Activated naive CD4-positive, alpha-beta T cell treated with anti-CD3 and anti-CD28 coated beads for 36 hours (primary cell): ENCODE measurements at regions of chr1 and their contacts with region 1.

Region 1: GRCh38 chr1:223123011-223123610 is 19.9 kb downstream of the TLR5 start:
- DNase-seq: no peak
- H3K4me3 Mint-ChIP-seq: peak overlapping the region; percentile 14
- H3K27ac Mint-ChIP-seq: no peak overlapping the region
- H3K4me1 Mint-ChIP-seq: peaks cover 8% of the 10 kb centered on the region
- H3K27me3 Mint-ChIP-seq: no peaks in the 10 kb centered on the region

Region 2: DNA sequence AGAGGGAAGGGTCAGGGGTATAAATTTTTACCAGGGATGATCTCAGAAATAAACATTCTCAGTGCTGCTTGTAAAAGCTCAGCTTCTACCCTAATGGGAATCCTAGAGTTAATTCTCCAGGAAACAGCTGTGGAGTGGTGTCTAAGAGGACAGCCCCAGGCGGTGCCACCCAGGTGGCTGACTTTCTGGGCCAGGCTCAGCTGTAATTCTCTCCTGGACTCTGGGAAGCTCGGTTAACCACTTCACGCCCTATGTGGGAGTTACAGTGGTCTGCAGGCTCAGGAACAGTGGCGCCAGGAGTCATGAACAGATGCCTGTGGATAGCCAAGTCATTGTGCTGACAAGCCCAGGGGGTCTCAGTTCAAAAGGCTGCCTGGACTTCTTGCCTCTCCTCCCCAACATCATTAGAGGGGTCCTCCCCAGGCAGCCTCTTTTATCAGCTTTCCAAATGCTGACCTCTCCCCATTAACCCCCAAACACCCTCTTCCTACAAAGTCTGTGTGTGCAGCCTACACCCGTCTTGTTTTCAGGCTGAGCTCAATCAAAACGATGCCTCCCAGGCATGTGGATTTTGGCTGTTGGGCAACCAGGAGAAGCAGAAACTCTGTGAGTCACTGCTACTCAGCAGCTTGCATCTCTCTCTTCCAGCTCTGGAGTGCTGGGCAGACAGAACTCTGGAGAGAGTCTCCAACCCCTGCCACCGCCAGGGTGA is 576.4 kb before region 1 on chr1:
- CTCF ChIA-PET with region 1: no interaction called
- intact Hi-C with region 1: no loop called
- DNase-seq: no peak
- H3K4me3 Mint-ChIP-seq: no peak overlapping the region
- H3K27ac Mint-ChIP-seq: no peak overlapping the region
- H3K4me1 Mint-ChIP-seq: no peaks in the 10 kb centered on the region
- H3K27me3 Mint-ChIP-seq: peaks cover 27% of the 10 kb centered on the region

Region 3: GRCh38 chr1:222736972-222737371 is 386.1 kb before region 1 on chr1 and contains the start of gene FAM177B:
- CTCF ChIA-PET with region 1: interaction called, 8 read pairs
- intact Hi-C with region 1: loop called (anchors 1 kb)
- DNase-seq: no peak
- H3K4me3 Mint-ChIP-seq: no peak within 1 kb of the TSS
- H3K27ac Mint-ChIP-seq: no peak within 1 kb of the TSS
- H3K4me1 Mint-ChIP-seq: peaks cover 6% of the 10 kb centered on the region
- H3K27me3 Mint-ChIP-seq: no peaks in the 10 kb centered on the region
- total RNA-seq, gene FAM177B: not detected

Region 4: DNA sequence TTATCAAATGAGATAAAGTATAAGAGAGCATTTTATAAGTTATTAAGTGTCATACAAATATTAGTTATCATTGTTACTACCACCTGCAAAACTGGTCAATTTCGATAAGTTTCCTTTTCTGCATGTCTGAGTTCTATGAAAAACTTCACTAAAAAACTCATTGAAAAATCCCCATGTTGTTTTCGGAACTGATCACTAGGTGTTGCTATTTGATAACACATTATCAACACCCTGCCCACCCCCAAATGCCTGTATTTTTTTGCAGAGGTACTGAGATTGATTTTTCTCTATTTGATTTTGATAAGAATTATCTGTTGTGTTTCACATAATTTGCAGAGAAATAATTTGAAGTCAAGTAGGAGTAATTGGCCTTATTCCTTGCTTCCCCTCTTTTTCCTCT is 330.4 kb before region 1 on chr1:
- CTCF ChIA-PET with region 1: interaction called, 12 read pairs
- intact Hi-C with region 1: loop called (anchors 1 kb)
- DNase-seq: no peak
- H3K4me3 Mint-ChIP-seq: no peak overlapping the region
- H3K27ac Mint-ChIP-seq: no peak overlapping the region
- H3K4me1 Mint-ChIP-seq: peaks cover 6% of the 10 kb centered on the region
- H3K27me3 Mint-ChIP-seq: no peaks in the 10 kb centered on the region

Region 5: GRCh38 chr1:223081181-223081994 is 41.7 kb before region 1 on chr1:
- CTCF ChIA-PET with region 1: interaction called, 6 read pairs
- intact Hi-C with region 1: loop called (anchors 1 kb)
- DNase-seq: peak; percentile 81
- H3K4me3 Mint-ChIP-seq: peak overlapping the region; percentile 61
- H3K27ac Mint-ChIP-seq: no peak overlapping the region
- H3K4me1 Mint-ChIP-seq: no peaks in the 10 kb centered on the region
- H3K27me3 Mint-ChIP-seq: no peaks in the 10 kb centered on the region

Region 6: GRCh38 chr1:223087291-223088255 is 35.5 kb before region 1 on chr1:
- CTCF ChIA-PET with region 1: interaction called, 16 read pairs
- intact Hi-C with region 1: loop called (anchors 2 kb)
- DNase-seq: no peak
- H3K4me3 Mint-ChIP-seq: no peak overlapping the region
- H3K27ac Mint-ChIP-seq: no peak overlapping the region
- H3K4me1 Mint-ChIP-seq: peaks cover 10% of the 10 kb centered on the region
- H3K27me3 Mint-ChIP-seq: no peaks in the 10 kb centered on the region

Region 7: GRCh38 chr1:223109581-223110026 is 13.5 kb before region 1 on chr1:
- CTCF ChIA-PET with region 1: interaction called, 32 read pairs
- intact Hi-C with region 1: loop called (anchors 1 kb)
- DNase-seq: peak; percentile 35
- H3K4me3 Mint-ChIP-seq: no peak overlapping the region
- H3K27ac Mint-ChIP-seq: no peak overlapping the region
- H3K4me1 Mint-ChIP-seq: peaks cover 7% of the 10 kb centered on the region
- H3K27me3 Mint-ChIP-seq: no peaks in the 10 kb centered on the region

Region 8: DNA sequence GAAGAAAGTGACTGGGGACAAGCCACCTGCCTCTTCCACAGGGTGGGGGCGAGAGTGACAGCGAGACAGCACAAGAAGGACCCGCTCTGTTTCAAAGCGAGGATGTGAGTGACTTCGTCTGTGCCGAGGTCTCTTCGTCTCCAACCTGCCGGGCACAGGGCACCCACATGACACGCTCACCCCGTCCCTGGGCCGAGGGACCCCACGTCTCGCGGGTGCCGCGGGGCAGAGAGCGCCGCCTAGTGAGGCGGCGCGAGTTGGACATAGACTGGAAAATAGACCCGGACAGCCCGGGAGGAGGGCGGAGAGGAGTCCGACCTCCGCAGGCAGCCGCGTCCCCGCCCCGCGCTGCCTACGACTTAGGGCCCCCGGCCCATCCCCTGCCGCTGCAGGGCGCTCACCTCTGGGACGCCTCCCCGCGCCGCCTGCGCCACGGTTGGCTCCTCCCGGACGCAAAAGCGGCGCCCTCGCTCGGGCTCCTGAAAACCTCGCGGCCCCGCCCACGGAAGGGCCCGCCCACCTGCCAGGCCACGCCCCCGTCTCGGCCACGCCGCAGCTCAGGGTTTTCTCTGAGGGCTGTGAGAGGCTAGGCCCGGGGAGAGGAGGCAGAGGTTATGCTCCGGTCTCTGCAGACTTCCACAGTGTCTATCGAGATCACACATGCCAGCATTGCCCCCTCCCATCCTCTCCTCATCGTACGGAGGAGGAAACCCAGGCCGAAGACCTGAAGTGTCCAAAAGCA is 19.9 kb after region 1 on chr1 and contains the start of gene TLR5:
- CTCF ChIA-PET with region 1: interaction called, 11 read pairs
- intact Hi-C with region 1: no loop called
- DNase-seq: peak; percentile 93
- H3K4me3 Mint-ChIP-seq: peak within 1 kb of the TSS; percentile 72
- H3K27ac Mint-ChIP-seq: peak within 1 kb of the TSS; percentile 22
- H3K4me1 Mint-ChIP-seq: peaks cover 28% of the 10 kb centered on the region
- H3K27me3 Mint-ChIP-seq: no peaks in the 10 kb centered on the region
- total RNA-seq, gene TLR5: 0.67 to 0.93 TPM